OCI-LY7 (cell line): ENCODE measurements at regions of chr17 and their contacts with region 1.

Region 1: GRCh38 chr17:50707289-50708049 is at the start of gene ANKRD40:
- DNase-seq: peak; percentile 91
- H3K4me3 ChIP-seq: peak within 1 kb of the TSS; percentile 92
- H3K27ac ChIP-seq: peak within 1 kb of the TSS; percentile 86
- H3K4me1 ChIP-seq: peaks cover 32% of the 10 kb centered on the region
- CTCF ChIP-seq: no peak
- total RNA-seq, gene ANKRD40: 25.7 and 27.7 TPM in 2 replicates

Region 2: GRCh38 chr17:50194934-50195865 is 512.3 kb before region 1 on chr17:
- CTCF ChIA-PET with region 1: no interaction called
- POLR2A ChIA-PET with region 1: no interaction called
- intact Hi-C with region 1: no loop called
- DNase-seq: no peak
- H3K4me3 ChIP-seq: no peak overlapping the region
- H3K27ac ChIP-seq: no peak overlapping the region
- H3K4me1 ChIP-seq: peaks cover 6% of the 10 kb centered on the region
- CTCF ChIP-seq: no peak; the same call in 1 of the 2 replicates

Region 3: GRCh38 chr17:50626037-50626574 is 81.4 kb before region 1 on chr17:
- CTCF ChIA-PET with region 1: no interaction called
- POLR2A ChIA-PET with region 1: no interaction called
- intact Hi-C with region 1: no loop called
- DNase-seq: peak; percentile 76
- H3K4me3 ChIP-seq: no peak overlapping the region
- H3K27ac ChIP-seq: no peak overlapping the region
- H3K4me1 ChIP-seq: no peaks in the 10 kb centered on the region
- CTCF ChIP-seq: peak; percentile 82

Region 4: GRCh38 chr17:50719144-50719923 is 11.9 kb after region 1 on chr17 and contains the start of gene LUC7L3:
- CTCF ChIA-PET with region 1: interaction called, 3 read pairs
- POLR2A ChIA-PET with region 1: interaction called, 10 read pairs
- intact Hi-C with region 1: loop called (anchors 1 kb)
- DNase-seq: peak; percentile 95
- H3K4me3 ChIP-seq: peak within 1 kb of the TSS; percentile 95
- H3K27ac ChIP-seq: peak within 1 kb of the TSS; percentile 84
- H3K4me1 ChIP-seq: peaks cover 31% of the 10 kb centered on the region
- CTCF ChIP-seq: no peak
- total RNA-seq, gene LUC7L3: 109 and 190 TPM in 2 replicates

Region 5: GRCh38 chr17:50834429-50835300 is 127.2 kb after region 1 on chr17:
- CTCF ChIA-PET with region 1: no interaction called
- POLR2A ChIA-PET with region 1: no interaction called
- intact Hi-C with region 1: no loop called
- DNase-seq: no peak
- H3K4me3 ChIP-seq: no peak overlapping the region
- H3K27ac ChIP-seq: no peak overlapping the region
- H3K4me1 ChIP-seq: no peaks in the 10 kb centered on the region
- CTCF ChIP-seq: no peak